OCI-LY7 (cell line): ENCODE measurements at regions of chr17 and their contacts with region 1.

Region 1: DNA sequence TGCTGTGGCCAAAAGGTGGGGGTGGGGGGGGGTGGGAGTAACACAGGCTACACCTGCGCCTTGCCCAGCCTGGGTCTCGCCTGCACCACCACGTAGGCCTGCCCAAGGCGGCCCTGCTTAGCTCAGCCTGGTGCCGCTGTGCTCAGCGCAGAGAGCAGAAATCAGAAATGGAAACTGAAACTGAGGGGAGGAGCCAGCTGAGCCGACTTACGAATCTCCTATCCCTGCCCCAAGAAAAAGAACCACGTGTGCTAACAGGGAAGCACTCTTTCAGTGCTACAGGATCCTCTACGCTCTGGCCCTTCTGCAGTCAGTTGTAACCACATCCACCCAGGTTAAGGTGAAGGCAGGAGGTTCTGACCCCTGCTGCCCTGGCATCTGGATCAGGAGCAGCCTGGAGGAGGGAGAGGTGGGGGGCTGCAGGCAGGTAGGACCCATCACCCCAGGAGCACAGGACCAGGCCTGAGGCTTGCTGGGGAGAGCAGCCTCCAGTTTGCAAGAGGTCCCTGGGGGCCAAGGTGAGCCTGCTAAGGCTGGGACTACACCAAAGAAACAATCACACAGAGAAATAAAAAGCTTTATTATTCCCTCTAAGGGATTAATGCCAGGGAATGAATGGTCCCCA is at the start of gene DHX58:
- DNase-seq: peak; percentile 95
- H3K4me3 ChIP-seq: peak within 1 kb of the TSS; percentile 63
- H3K27ac ChIP-seq: peak within 1 kb of the TSS; percentile 83
- H3K4me1 ChIP-seq: peaks cover 73% of the 10 kb centered on the region
- CTCF ChIP-seq: no peak
- total RNA-seq, gene DHX58: 7.7 and 10.3 TPM in 2 replicates

Region 2: GRCh38 chr17:41738077-41738735 is 374.5 kb before region 1 on chr17:
- CTCF ChIA-PET with region 1: no interaction called
- POLR2A ChIA-PET with region 1: no interaction called
- intact Hi-C with region 1: loop called (anchors 10 kb)
- DNase-seq: peak; percentile 84
- H3K4me3 ChIP-seq: no peak overlapping the region
- H3K27ac ChIP-seq: no peak overlapping the region
- H3K4me1 ChIP-seq: peaks cover 4% of the 10 kb centered on the region
- CTCF ChIP-seq: peak; percentile 98

Region 3: GRCh38 chr17:41966463-41967140 is 146.1 kb before region 1 on chr17 and contains the start of gene CNP:
- CTCF ChIA-PET with region 1: interaction called, 9 read pairs
- POLR2A ChIA-PET with region 1: interaction called, 7 read pairs
- intact Hi-C with region 1: loop called (anchors 1 kb)
- DNase-seq: peak; percentile 91
- H3K4me3 ChIP-seq: peak within 1 kb of the TSS; percentile 92
- H3K27ac ChIP-seq: peak within 1 kb of the TSS; percentile 62
- H3K4me1 ChIP-seq: peaks cover 33% of the 10 kb centered on the region
- CTCF ChIP-seq: no peak
- total RNA-seq, gene CNP: 33.8 and 34.1 TPM in 2 replicates

Region 4: DNA sequence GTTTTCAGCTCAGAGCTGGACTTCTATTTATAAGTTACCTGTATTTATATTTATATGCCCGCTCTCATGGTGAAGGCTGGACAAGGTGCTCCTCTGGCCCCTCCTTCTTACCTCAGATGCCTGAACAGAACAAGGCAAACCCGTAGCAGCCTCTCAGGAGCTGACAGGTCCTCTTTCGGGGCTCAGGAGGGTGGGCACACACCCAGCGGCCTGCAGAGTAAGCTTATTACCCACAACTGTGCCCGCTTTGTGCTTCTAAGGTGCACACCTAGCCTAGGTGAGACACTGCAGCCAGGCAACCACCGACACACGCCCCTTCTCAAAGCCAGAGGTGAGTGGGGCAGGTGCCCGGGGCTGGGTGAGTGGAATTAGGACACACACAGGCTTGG is 87.5 kb before region 1 on chr17:
- CTCF ChIA-PET with region 1: interaction called, 5 read pairs
- POLR2A ChIA-PET with region 1: interaction called, 6 read pairs
- intact Hi-C with region 1: loop called (anchors 1 kb)
- DNase-seq: no peak
- H3K4me3 ChIP-seq: no peak overlapping the region
- H3K27ac ChIP-seq: peak overlapping the region; percentile 53
- H3K4me1 ChIP-seq: peaks cover 26% of the 10 kb centered on the region
- CTCF ChIP-seq: peak; percentile 67; the same call in 1 of the 2 replicates

Region 5: GRCh38 chr17:42045719-42046118 is 66.9 kb before region 1 on chr17:
- CTCF ChIA-PET with region 1: no interaction called
- POLR2A ChIA-PET with region 1: no interaction called
- intact Hi-C with region 1: no loop called
- DNase-seq: no peak
- H3K4me3 ChIP-seq: no peak overlapping the region
- H3K27ac ChIP-seq: no peak overlapping the region
- H3K4me1 ChIP-seq: no peaks in the 10 kb centered on the region
- CTCF ChIP-seq: no peak

Region 6: GRCh38 chr17:42067351-42068091 is 45.1 kb before region 1 on chr17:
- CTCF ChIA-PET with region 1: interaction called, 3 read pairs
- POLR2A ChIA-PET with region 1: interaction called, 3 read pairs
- intact Hi-C with region 1: loop called (anchors 1 kb)
- DNase-seq: peak; percentile 72
- H3K4me3 ChIP-seq: no peak overlapping the region
- H3K27ac ChIP-seq: no peak overlapping the region
- H3K4me1 ChIP-seq: peaks cover 23% of the 10 kb centered on the region
- CTCF ChIP-seq: peak; percentile 99

Region 7: GRCh38 chr17:42142371-42142896 is 29.8 kb after region 1 on chr17:
- CTCF ChIA-PET with region 1: no interaction called
- POLR2A ChIA-PET with region 1: no interaction called
- intact Hi-C with region 1: no loop called
- DNase-seq: no peak
- H3K4me3 ChIP-seq: no peak overlapping the region
- H3K27ac ChIP-seq: no peak overlapping the region
- H3K4me1 ChIP-seq: peaks cover 22% of the 10 kb centered on the region
- CTCF ChIP-seq: no peak

Region 8: GRCh38 chr17:42312285-42313130 is 199.8 kb after region 1 on chr17:
- CTCF ChIA-PET with region 1: interaction called, 11 read pairs
- POLR2A ChIA-PET with region 1: no interaction called
- intact Hi-C with region 1: no loop called
- DNase-seq: peak; percentile 78
- H3K4me3 ChIP-seq: peak overlapping the region; percentile 46
- H3K27ac ChIP-seq: no peak overlapping the region
- H3K4me1 ChIP-seq: peaks cover 34% of the 10 kb centered on the region
- CTCF ChIP-seq: peak; percentile 83

Region 9: DNA sequence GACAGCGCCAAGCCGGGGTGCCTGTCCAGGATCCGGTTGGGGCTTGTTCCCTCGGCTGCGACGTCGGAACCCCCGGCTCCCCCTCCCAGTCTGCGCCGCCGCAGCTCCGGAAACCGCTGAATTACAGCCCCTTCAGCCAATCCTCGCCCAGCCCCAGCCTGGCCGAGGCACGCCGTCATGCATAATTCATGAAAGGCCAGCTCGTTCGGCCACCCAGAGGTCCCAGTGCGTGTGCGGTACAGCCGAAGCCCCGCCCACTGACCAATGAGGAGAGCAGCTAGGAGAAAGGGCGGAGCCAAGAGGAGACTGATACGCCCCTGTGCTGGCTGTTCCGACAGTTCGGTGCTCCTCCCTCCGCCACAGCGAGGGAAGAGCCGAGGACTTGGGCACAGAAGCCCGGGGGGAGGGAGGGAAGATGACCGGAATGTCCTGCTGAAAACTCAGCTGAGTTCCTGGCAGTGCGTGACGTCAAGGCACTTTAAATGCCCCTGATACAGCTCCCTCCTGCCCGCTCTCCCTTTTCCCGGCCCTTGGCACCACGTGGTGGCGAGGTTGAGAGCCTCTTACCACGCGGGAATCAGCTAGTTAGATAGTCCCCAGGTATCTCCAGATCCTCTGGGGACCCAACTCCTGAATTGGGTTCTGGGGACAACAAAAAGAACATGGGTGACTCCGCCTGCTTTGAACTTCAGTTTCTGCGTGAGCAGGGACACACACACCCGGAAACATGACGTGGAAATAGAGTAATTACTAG is 275.9 kb after region 1 on chr17 and contains the start of gene STAT3:
- CTCF ChIA-PET with region 1: no interaction called
- POLR2A ChIA-PET with region 1: interaction called, 3 read pairs
- intact Hi-C with region 1: loop called (anchors 10 kb)
- DNase-seq: peak; percentile 100
- H3K4me3 ChIP-seq: peak within 1 kb of the TSS; percentile 77
- H3K27ac ChIP-seq: peak within 1 kb of the TSS; percentile 9
- H3K4me1 ChIP-seq: peaks cover 35% of the 10 kb centered on the region
- CTCF ChIP-seq: no peak
- total RNA-seq, gene STAT3: 11.4 and 14.8 TPM in 2 replicates